ENCODE measurements at regions of chr10 and their contacts with region 1.

Region 1: GRCh38 chr10:20858292-20859124 is 38.6 kb downstream of the NEBL start:
- DNase-seq: no peak
- H3K4me3 Mint-ChIP-seq: no peak overlapping the region
- H3K27ac Mint-ChIP-seq: no peak overlapping the region
- H3K4me1 Mint-ChIP-seq: no peaks in the 10 kb centered on the region
- H3K27me3 Mint-ChIP-seq: no peaks in the 10 kb centered on the region
- CTCF ChIP-seq: no peak

Region 2: GRCh38 chr10:19819419-19820033 is 1039.0 kb before region 1 on chr10:
- CTCF ChIA-PET with region 1: no interaction called
- intact Hi-C with region 1: loop called (anchors 5 kb)
- DNase-seq: no peak
- H3K4me3 Mint-ChIP-seq: no peak overlapping the region
- H3K27ac Mint-ChIP-seq: no peak overlapping the region
- H3K4me1 Mint-ChIP-seq: no peaks in the 10 kb centered on the region
- H3K27me3 Mint-ChIP-seq: peaks cover 32% of the 10 kb centered on the region
- CTCF ChIP-seq: peak; percentile 57

Region 3: DNA sequence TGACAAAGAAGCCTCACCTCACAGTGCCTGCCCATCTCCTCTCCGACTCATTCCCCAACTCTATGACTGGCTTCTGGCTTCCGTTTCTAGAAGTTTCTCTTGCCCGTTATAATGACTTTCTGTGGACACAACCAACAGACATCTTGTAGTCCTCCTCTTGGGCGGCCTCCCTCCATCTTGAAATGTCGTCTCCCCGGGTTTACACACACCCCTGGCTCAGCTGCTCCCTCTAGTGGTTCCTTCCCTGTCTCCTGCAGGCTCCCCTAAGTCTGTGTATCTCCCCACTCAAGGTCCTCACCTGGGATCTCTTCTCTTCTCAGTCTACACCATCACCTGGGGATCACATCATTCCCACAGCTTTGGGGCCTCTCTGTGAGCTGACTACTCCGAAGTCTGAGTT is 162.0 kb after region 1 on chr10:
- CTCF ChIA-PET with region 1: no interaction called
- intact Hi-C with region 1: no loop called
- DNase-seq: peak; percentile 30
- H3K4me3 Mint-ChIP-seq: no peak overlapping the region
- H3K27ac Mint-ChIP-seq: no peak overlapping the region
- H3K4me1 Mint-ChIP-seq: no peaks in the 10 kb centered on the region
- H3K27me3 Mint-ChIP-seq: no peaks in the 10 kb centered on the region
- CTCF ChIP-seq: peak; percentile 23

Region 4: GRCh38 chr10:21273400-21273932 is 415.0 kb after region 1 on chr10:
- CTCF ChIA-PET with region 1: no interaction called
- intact Hi-C with region 1: loop called (anchors 1 kb)
- DNase-seq: no peak
- H3K4me3 Mint-ChIP-seq: no peak overlapping the region
- H3K27ac Mint-ChIP-seq: no peak overlapping the region
- H3K4me1 Mint-ChIP-seq: peaks cover 14% of the 10 kb centered on the region
- H3K27me3 Mint-ChIP-seq: no peaks in the 10 kb centered on the region
- CTCF ChIP-seq: no peak

Region 5: DNA sequence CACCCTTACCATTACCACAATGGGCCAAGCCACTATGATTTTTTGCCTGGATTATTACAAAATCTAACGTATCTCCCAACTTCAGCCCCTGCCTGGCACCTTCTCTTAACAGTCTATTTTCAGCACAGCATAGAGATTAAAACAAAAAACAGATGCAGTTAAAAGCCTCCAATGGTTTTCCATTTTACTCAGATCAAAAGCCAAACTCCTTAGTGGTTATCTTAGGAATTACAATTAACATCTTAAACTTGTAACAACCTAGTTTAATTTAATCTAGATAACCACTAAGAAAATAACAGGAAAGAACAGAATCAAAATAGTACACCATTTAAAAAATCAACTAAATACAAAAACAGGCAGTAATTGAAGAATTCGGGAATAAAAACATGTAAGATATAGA is 1101.5 kb after region 1 on chr10:
- CTCF ChIA-PET with region 1: no interaction called
- intact Hi-C with region 1: loop called (anchors 5 kb)
- DNase-seq: no peak
- H3K4me3 Mint-ChIP-seq: no peak overlapping the region
- H3K27ac Mint-ChIP-seq: no peak overlapping the region
- H3K4me1 Mint-ChIP-seq: no peaks in the 10 kb centered on the region
- H3K27me3 Mint-ChIP-seq: no peaks in the 10 kb centered on the region
- CTCF ChIP-seq: no peak

Measured in Calu3 (cell line).